Posterior vena cava (tissue), 2 donors: ENCODE measurements at regions of chr1 and their contacts with region 1.

Region 1: DNA sequence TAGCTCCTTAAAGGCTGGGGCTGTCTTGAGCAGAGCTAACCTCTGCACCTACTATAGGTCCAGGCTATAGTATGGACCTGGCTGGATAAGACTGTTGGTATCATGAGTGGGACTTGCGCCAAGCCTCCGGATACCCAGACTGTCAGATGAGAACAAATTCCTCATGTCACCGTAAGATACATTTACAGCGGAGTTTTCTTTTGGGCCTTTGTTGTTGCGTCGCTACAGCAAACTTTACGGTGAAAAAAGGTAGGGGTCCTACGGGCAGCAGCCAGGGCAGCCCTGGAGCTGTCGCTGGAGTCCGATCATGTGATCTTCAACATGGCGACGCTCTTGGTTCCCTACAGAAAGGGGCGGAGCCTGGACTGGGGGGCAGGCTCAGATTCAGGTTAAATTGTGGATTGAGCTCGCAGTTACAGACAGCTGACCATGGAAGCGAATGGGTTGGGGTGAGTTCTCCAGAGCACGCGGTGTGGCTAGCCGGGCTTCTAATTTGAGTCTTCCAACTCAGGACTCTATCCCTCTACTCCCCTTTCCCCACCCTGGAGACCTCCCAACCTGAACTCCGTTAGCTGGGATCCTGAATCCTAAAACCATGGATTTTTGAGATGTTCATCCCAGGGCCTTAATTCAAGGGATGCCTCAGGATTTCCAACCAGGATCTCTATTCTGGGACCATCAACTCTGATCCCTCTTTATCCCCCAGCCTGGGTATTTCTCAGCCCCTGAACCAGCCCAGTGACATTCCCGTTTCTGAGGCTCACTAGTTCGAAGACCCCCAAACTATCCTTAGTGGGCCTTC is at the start of gene UROD:
- DNase-seq: peak; percentile 97
- total RNA-seq, gene UROD: 59.5 to 68.6 TPM

Region 2: DNA sequence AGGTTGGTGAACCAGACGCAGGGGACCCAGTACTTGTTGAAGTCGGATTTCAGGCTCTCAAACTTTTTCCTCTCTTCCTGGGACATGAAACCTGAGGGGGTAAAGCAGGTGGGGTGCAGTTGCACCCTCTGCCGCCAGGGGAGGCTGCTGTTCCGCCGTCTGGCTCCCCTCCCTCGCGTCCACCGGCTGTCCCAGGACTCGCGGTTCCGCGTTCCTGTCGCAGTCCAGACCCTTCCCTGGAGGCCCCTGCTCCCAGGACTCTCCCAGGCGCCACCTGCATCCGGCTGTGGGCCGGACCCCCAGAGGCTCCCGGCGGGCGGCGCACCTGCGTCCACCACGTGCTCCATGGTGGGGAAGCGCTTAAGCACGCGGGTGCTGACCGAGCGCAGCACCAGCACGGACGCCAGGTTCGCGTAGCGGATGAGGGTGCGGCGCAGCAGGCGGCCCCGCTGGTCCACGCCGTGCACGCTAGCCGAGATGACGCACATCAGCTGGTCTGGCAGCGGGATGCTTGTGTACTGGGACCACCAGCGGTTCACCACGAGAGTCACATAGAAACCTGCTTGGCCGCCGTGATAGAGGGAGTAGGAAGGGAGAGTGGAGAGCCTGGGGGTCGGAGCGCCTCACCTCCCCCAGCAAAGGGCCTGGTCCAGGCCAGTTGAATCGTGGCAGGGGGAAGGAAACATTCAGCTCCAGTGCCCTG is 225.7 kb before region 1 on chr1:
- intact Hi-C with region 1: loop called in 1 of 2 experiments (anchors 10 kb)
- DNase-seq: peak; percentile 88

Region 3: GRCh38 chr1:44835738-44836675 is 176.0 kb before region 1 on chr1:
- intact Hi-C with region 1: loop called in 1 of 2 experiments (anchors 10 kb)
- DNase-seq: peak; percentile 96

Region 4: GRCh38 chr1:45071567-45071966 is 59.5 kb after region 1 on chr1:
- intact Hi-C with region 1: loop called in 1 of 2 experiments (anchors 2 kb)
- DNase-seq: no peak

Region 5: GRCh38 chr1:45303582-45304310 is 291.7 kb after region 1 on chr1:
- intact Hi-C with region 1: loop called (anchors 2 to 5 kb)
- DNase-seq: peak; percentile 100

Region 6: DNA sequence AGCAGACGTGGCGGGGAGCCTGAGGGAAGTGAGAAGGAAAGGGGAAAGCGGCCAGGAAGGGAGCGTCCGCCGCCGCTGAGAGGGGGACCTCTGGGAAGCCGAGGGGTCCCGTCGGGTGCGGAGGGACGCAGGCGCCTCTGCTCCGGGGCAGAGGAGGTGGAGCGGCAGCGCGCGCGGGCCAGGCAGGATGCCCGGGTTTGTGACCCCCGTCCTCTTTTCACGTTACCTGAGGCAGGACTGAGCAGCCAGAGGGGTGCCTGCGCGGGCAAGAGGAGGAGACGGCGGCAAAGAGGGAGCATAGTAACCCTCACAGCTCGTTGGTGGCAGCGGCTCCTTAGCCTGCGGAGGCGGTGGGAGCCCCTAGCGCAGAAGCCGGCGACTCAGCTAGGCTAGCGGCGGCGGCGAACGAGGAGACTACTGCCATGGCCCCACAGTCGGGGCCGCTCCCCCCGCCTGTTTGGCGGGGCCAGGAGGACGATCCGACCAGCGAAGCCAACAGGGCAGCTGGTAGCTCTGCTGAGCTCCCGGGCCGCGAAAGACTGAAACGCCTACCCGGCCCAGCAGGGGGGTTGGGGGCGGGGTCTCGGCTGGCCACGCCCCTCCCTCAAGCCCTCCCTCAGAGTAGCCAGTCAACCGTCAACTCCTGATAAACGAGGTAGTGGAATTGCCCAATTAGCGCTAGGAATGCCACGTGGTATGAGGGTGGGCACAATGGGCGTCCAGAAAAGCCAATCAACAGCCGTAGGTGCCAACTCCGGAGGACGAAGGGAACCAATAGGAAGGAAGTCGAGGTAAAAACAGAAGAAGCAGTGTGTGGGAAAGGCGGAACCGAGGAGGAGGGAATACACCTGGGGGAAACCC is 478.8 kb after region 1 on chr1 and contains the start of gene TESK2:
- intact Hi-C with region 1: loop called (anchors 2 to 10 kb)
- DNase-seq: peak; percentile 98
- total RNA-seq, gene TESK2: 2.8 to 3.0 TPM

Region 7: DNA sequence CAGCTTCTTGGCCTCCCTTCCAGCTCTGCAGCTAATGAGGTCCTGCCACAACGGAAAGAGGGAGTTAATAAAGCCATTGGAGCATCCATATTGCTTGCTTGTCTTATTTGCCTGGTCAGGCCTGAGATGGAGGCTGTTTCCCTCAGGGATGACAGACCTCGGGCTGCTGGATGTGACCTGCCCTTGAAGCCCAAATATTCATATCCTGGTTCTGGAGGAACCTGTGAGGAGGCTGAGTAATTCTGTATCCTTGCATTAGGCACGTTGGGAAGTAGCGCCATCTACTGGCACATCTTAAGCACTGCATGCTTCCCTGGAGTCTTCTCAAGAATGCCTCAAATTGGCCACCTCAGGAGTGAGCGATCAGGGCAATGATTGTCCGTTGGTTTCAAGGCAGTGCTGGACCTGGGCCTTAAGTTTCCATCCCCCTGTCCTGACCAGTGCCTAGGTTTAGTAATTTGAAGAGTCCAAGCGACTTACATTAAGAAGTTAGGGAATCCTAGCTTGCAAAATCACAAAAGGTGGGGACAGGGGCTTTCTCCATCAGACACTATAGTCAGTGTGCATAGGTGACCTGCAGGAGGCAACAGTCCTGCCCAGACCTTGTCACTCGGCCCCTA is 558.0 kb after region 1 on chr1:
- intact Hi-C with region 1: loop called in 1 of 2 experiments (anchors 5 kb)
- DNase-seq: peak; percentile 88